Dorsolateral prefrontal cortex (tissue), 120 donors: ENCODE measurements at regions of chr17 and their contacts with region 1.

Region 1: GRCh38 chr17:19728079-19728495 is 11.7 kb upstream of the SLC47A2 start:
- DNase-seq: peak; percentile 49 to 87 (median 82)
- H3K4me3 ChIP-seq: no peak overlapping the region
- H3K27ac ChIP-seq: peak overlapping the region; percentile 79 to 100 (median 98)
- H3K27me3 ChIP-seq: no peaks in the 10 kb centered on the region
- CTCF ChIP-seq: peak in 7 of 56 donors; percentile 5 to 22 (median 9)

Region 2: DNA sequence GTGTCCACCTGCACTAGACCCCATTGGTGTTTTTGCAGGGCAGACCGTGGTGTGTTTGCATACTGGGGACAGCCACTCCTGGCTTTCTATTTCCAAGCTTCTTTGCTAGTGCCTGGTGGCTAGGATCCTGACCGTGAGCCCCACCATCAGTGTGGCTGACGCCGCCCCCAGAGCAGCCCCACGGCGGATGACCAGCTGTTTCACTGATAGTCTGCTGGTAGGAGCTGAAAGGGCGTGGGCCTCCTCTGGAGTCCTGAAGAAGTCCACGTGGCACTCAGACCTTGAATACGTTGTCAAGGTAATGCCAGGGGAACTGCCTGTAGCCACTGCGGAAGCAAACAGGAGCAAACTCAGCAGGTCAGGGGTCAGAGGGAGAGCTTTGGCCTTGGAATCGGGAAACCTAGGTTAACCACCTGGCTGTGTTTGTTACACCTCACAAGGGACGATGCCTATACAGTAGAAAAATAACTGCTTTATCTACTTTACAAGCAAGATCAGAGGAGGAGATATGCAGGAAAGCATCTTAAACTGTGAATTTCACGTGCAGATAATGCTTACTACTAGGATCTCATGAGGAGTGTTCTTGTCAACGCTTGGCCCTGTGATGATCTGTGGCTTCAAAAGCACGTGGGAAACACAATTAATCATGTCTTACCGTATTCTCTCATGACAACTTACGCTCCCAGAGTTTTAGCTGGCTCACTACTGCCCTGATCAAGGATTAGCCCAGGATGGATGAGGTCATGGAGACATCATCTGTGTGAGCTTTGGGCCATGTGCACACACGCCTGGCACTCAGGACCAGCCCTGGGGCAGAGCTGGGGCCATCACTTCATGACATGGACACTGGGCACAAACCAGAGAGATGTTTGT is 49.3 kb before region 1 on chr17:
- intact Hi-C with region 1: loop called in 1 of 2 experiments (anchors 5 kb)
- DNase-seq: no peak
- H3K4me3 ChIP-seq: no peak overlapping the region
- H3K27ac ChIP-seq: peak overlapping the region in 26 of 59 donors; percentile 3 to 78 (median 48)
- H3K27me3 ChIP-seq: no peaks in the 10 kb centered on the region
- CTCF ChIP-seq: no peak

Region 3: GRCh38 chr17:19744922-19745757 is 17.1 kb after region 1 on chr17:
- intact Hi-C with region 1: loop called in 1 of 2 experiments (anchors 2 kb)
- DNase-seq: peak; percentile 90 to 97 (median 94)
- H3K4me3 ChIP-seq: peak overlapping the region; percentile 45 to 76 (median 61)
- H3K27ac ChIP-seq: peak overlapping the region in 51 of 59 donors; percentile 7 to 84 (median 62)
- H3K27me3 ChIP-seq: no peaks in the 10 kb centered on the region
- CTCF ChIP-seq: peak; percentile 73 to 97 (median 92)

Region 4: DNA sequence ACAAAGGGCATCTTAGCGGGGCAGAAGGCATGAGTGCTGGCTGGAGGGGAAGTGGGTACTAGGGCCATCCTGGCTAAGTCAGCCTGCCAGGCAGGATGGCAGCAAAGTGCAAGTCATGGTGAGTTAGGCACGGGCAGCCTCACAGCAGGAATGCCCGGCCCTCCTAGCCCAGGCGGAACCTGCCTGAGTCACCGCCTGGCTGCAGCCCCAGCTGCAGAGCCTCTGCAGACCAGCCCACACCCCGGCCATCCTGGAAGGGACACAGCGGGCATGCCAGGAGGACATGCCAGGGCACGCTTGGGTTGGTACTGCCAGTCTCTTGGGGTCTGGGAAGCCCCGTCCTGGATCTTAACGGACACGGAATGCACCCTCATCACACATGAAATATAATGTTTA is 25.0 kb after region 1 on chr17:
- intact Hi-C with region 1: loop called in 1 of 2 experiments (anchors 2 kb)
- DNase-seq: peak in 9 of 10 donors; percentile 53 to 92 (median 77)
- H3K4me3 ChIP-seq: peak overlapping the region in 9 of 59 donors; percentile 0 to 39 (median 11)
- H3K27ac ChIP-seq: peak overlapping the region in 58 of 59 donors; percentile 42 to 96 (median 86)
- H3K27me3 ChIP-seq: no peaks in the 10 kb centered on the region
- CTCF ChIP-seq: peak in 4 of 56 donors; percentile 6 to 29 (median 8)